ENCODE measurements at regions of chr7 and their contacts with region 1.

Region 1: GRCh38 chr7:27647052-27647451 is 15.6 kb downstream of the HIBADH start:
- DNase-seq: no peak
- H3K4me3 ChIP-seq: no peak overlapping the region
- H3K27ac ChIP-seq: no peak overlapping the region
- H3K4me1 ChIP-seq: peaks cover 0 to 3% (median 0%) of the 10 kb centered on the region in 4 donors
- H3K27me3 ChIP-seq: no peaks in the 10 kb centered on the region
- CTCF ChIP-seq: no peak
- EP300 ChIP-seq: no peak
- POLR2A ChIP-seq: no peak

Region 2: GRCh38 chr7:27677912-27678612 is 31.0 kb after region 1 on chr7:
- intact Hi-C with region 1: loop called (anchors 2 kb)
- DNase-seq: no peak
- H3K4me3 ChIP-seq: no peak overlapping the region
- H3K27ac ChIP-seq: peak overlapping the region; percentile 58 to 81 (median 68)
- H3K4me1 ChIP-seq: peaks cover 0 to 16% (median 15%) of the 10 kb centered on the region in 4 donors
- H3K27me3 ChIP-seq: no peaks in the 10 kb centered on the region
- CTCF ChIP-seq: no peak
- EP300 ChIP-seq: no peak
- POLR2A ChIP-seq: no peak

Measured in sigmoid colon (tissue), 7 donors.